A673 (cell line): ENCODE measurements at regions of chr1 and their contacts with region 1.

Region 1: GRCh38 chr1:232558954-232559353 is 71.0 kb downstream of the SIPA1L2 start:
- DNase-seq: peak; percentile 99
- H3K4me3 ChIP-seq: no peak overlapping the region
- H3K27ac ChIP-seq: no peak overlapping the region
- H3K4me1 ChIP-seq: peaks cover 64% of the 10 kb centered on the region
- H3K27me3 ChIP-seq: no peaks in the 10 kb centered on the region
- CTCF ChIP-seq: no peak

Region 2: GRCh38 chr1:232617192-232617591 is 58.2 kb after region 1 on chr1:
- CTCF ChIA-PET with region 1: no interaction called
- POLR2A ChIA-PET with region 1: no interaction called
- intact Hi-C with region 1: loop called (anchors 5 kb)
- DNase-seq: no peak
- H3K4me3 ChIP-seq: no peak overlapping the region
- H3K27ac ChIP-seq: no peak overlapping the region
- H3K4me1 ChIP-seq: peaks cover 53% of the 10 kb centered on the region
- H3K27me3 ChIP-seq: no peaks in the 10 kb centered on the region
- CTCF ChIP-seq: no peak